ENCODE measurements at regions of chr12 and their contacts with region 1.

Region 1: GRCh38 chr12:24244801-24245200 is 295.3 kb upstream of the SOX5 start:
- DNase-seq: no peak
- H3K4me3 ChIP-seq: no peak overlapping the region
- CTCF ChIP-seq: no peak
- POLR2A ChIP-seq: no peak

Region 2: DNA sequence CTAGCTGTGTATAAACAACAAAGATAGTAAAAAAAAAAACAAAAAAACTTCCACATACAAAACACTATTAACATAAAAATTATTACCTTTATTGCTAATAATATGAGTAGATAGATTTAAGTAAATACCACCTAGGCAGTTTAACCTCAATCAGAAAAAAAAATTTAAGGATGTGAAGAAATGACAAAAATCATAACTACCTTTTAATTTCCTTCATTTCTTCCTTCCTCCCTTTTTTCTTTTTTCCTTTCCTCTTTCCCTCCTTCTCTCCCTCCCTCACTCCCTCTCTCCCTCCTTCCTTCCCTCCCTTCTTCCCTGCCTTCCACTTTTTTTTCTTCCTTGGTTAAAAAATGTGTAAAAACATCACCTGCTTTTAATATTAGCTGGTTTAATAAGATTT is 377.0 kb before region 1 on chr12:
- intact Hi-C with region 1: loop called (anchors 5 kb)
- DNase-seq: no peak
- H3K4me3 ChIP-seq: no peak overlapping the region
- CTCF ChIP-seq: no peak
- POLR2A ChIP-seq: no peak

Region 3: GRCh38 chr12:24206621-24207020 is 38.2 kb before region 1 on chr12:
- intact Hi-C with region 1: no loop called
- DNase-seq: no peak
- H3K4me3 ChIP-seq: no peak overlapping the region
- CTCF ChIP-seq: no peak
- POLR2A ChIP-seq: no peak

Region 4: GRCh38 chr12:24386836-24387235 is 142.0 kb after region 1 on chr12:
- intact Hi-C with region 1: no loop called
- DNase-seq: no peak
- H3K4me3 ChIP-seq: no peak overlapping the region
- CTCF ChIP-seq: no peak
- POLR2A ChIP-seq: no peak

Measured in lower leg skin (tissue), 4 donors.